ENCODE measurements at regions of chr16 and their contacts with region 1.

Region 1: DNA sequence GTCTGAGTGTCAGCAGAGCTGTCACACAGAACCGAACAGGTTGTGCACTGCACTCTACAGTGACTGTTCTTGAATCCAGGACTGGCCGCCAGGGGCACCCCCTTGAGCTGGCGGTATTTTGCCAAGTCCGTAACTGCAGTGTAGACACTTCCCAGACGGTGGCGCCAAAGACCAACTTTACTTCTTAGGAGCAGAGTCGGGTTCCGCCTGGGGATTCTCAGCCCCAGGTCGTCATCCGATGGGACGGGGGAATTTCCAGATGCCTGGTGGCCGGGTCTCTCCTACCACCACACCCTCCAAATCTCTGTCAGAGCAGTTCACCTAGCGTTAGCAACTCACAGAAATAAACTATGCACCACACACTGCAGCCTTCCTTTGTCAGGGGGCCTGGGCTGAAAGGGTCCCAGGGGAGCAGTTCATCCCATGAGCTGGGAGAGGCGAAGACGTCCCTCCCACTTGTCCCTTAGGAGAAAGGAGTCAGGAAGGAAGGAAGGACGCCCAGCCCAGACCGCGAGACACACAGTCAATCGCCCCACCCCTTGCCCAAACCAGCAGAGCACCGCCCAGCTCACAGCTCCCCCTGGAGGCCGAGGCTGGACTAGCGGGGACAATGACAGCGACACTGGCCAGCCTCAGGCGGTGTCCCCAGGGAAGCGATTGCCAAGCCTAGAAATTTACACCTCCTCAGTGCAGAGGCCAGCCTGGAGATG is 7.4 kb upstream of the RIPOR1 start:
- DNase-seq: peak; percentile 90 to 98 (median 94)
- ATAC-seq: peak; percentile 88 to 90
- H3K4me3 Mint-ChIP-seq: peak overlapping the region; percentile 86 to 96 (median 92)
- H3K27ac Mint-ChIP-seq: peak overlapping the region; percentile 84 to 99 (median 97)
- H3K4me1 Mint-ChIP-seq: peaks cover 22 to 52% (median 46%) of the 10 kb centered on the region in 4 donors
- H3K27me3 Mint-ChIP-seq: no peaks in the 10 kb centered on the region

Region 2: DNA sequence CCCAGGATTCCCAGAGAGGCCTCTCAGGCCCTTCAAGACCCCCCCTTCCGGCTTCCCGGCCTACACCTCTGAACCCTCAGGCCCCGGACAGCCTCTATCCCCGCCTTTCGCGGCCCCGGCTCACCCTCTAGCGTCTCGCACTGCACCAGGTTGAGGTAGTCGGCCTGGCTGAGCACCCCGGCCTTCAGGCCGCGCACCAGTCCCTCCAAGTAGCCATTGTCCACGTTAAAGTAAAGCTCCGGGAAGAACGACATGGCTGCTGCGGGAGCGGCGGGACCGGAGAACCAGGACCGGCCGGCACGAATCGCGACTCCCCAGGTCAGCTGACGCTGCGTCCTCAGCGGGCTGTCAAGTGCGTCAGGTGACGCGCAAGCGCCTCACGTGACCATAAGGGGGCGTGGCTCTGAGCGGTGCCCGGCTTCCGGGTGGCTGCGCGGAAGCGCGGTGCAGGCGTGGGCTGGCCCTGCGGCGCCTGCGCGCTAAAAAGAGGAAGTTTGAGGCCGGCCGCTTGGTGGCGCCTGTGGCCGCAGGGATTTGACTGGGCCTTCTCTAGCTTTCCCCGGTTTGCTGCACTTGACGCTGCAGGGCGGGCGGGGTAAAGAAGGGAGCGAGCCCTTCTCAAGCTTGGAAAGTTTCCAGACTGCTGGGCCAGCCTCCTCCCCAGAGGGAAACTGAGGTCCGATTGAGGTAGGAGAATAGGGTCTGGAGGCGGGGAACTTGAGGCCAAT is 40.3 kb before region 1 on chr16 and contains the start of gene ATP6V0D1:
- POLR2A ChIA-PET with region 1: interaction called, 33 read pairs
- DNase-seq: peak; percentile 97 to 99 (median 98)
- ATAC-seq: peak; percentile 83 to 91
- H3K4me3 Mint-ChIP-seq: peak within 1 kb of the TSS; percentile 95 to 100 (median 98)
- H3K27ac Mint-ChIP-seq: peak within 1 kb of the TSS; percentile 89 to 100 (median 98)
- H3K4me1 Mint-ChIP-seq: peaks cover 18 to 70% (median 53%) of the 10 kb centered on the region in 4 donors
- H3K27me3 Mint-ChIP-seq: no peaks in the 10 kb centered on the region
- polyA plus RNA-seq, gene ATP6V0D1: 74.7 to 89.6 (median 77.5) TPM

Region 3: DNA sequence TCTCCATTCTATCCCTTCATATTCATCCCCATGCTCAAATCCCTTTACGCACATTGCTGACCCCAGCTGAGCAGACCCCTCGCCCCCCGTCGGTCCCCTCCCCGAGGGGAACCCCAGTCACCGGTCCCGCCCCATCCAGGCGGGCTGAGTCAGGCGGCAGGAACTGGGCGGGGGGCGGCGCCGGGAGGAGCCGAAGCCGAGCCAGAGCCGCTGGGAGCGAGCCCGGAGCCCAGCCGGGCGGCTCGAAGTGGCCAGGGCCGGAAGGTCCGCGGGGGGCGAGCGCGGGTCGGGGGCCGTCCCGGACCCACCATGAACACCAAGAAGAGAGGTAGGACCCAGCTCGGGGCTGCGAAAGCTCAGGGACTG is 16.0 kb after region 1 on chr16:
- POLR2A ChIA-PET with region 1: interaction called, 22 read pairs
- DNase-seq: peak in 5 of 10 donors; percentile 36 to 54 (median 40)
- ATAC-seq: peak; percentile 44 to 47
- H3K4me3 Mint-ChIP-seq: peak overlapping the region; percentile 74 to 91 (median 85)
- H3K27ac Mint-ChIP-seq: peak overlapping the region; percentile 52 to 92 (median 84)
- H3K4me1 Mint-ChIP-seq: peaks cover 36 to 64% (median 46%) of the 10 kb centered on the region in 4 donors
- H3K27me3 Mint-ChIP-seq: no peaks in the 10 kb centered on the region

Region 4: GRCh38 chr16:67546761-67547422 is 25.6 kb after region 1 on chr16:
- POLR2A ChIA-PET with region 1: interaction called, 16 read pairs
- DNase-seq: peak; percentile 58 to 88 (median 74)
- ATAC-seq: peak; percentile 36 to 57
- H3K4me3 Mint-ChIP-seq: peak overlapping the region; percentile 70 to 90 (median 84)
- H3K27ac Mint-ChIP-seq: peak overlapping the region; percentile 81 to 99 (median 96)
- H3K4me1 Mint-ChIP-seq: peaks cover 34 to 71% (median 60%) of the 10 kb centered on the region in 4 donors
- H3K27me3 Mint-ChIP-seq: no peaks in the 10 kb centered on the region

Measured in naive thymus-derived CD8-positive, alpha-beta T cell (primary cell).